ENCODE measurements at regions of chr17 and their contacts with region 1.

Region 1: DNA sequence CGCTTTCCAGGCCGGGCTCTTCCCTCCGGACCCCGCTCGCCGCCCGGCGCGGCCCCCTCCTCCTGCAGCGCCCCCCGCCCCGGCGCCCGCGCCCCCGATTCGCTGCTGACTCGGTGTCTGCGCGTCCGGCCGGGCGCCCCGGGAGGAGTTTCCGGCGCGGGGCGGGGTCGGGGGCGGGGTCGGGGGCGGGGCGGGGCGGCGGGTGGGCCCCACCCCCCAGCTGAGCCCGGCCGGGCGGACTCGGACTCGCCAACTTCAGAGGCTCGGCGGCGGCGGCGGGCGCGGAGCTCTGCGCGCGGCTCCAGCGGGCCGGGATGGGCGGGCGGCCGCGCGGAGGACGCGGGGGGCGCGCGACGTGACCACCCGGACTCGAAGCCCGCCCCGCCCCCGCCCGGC is at the start of gene METRNL:
- DNase-seq: peak; percentile 71
- H3K4me3 Mint-ChIP-seq: peak within 1 kb of the TSS; percentile 45
- H3K27ac Mint-ChIP-seq: no peak within 1 kb of the TSS
- H3K4me1 Mint-ChIP-seq: peaks cover 27% of the 10 kb centered on the region
- H3K27me3 Mint-ChIP-seq: peaks cover 14% of the 10 kb centered on the region
- total RNA-seq, gene METRNL: 62.8 to 71.1 TPM

Region 2: GRCh38 chr17:83051395-83052233 is 27.7 kb before region 1 on chr17:
- CTCF ChIA-PET with region 1: no interaction called
- POLR2A ChIA-PET with region 1: interaction called, 3 read pairs
- intact Hi-C with region 1: loop called (anchors 2 kb)
- DNase-seq: peak; percentile 99
- H3K4me3 Mint-ChIP-seq: peak overlapping the region; percentile 86
- H3K27ac Mint-ChIP-seq: peak overlapping the region; percentile 88
- H3K4me1 Mint-ChIP-seq: peaks cover 40% of the 10 kb centered on the region
- H3K27me3 Mint-ChIP-seq: no peaks in the 10 kb centered on the region

Region 3: GRCh38 chr17:83200202-83200699 is 120.9 kb after region 1 on chr17:
- CTCF ChIA-PET with region 1: interaction called, 9 read pairs
- POLR2A ChIA-PET with region 1: interaction called, 11 read pairs
- intact Hi-C with region 1: no loop called
- DNase-seq: peak; percentile 90
- H3K4me3 Mint-ChIP-seq: peak overlapping the region; percentile 56
- H3K27ac Mint-ChIP-seq: peak overlapping the region; percentile 98
- H3K4me1 Mint-ChIP-seq: peaks cover 37% of the 10 kb centered on the region
- H3K27me3 Mint-ChIP-seq: no peaks in the 10 kb centered on the region

Measured in activated CD4-positive, alpha-beta memory T cell treated with anti-CD3 and anti-CD28 coated beads for 36 hours (primary cell).